Activated naive CD4-positive, alpha-beta T cell treated with anti-CD3 and anti-CD28 coated beads, Interleukin-2, amount 10 ng/mL, durations not matched to agents 7 days and 5 days (primary cell): ENCODE measurements at regions of chr17 and their contacts with region 1.

Region 1: GRCh38 chr17:56939901-56940343 is 20.9 kb downstream of the COIL start:
- DNase-seq: no peak
- H3K4me3 Mint-ChIP-seq: no peak overlapping the region
- H3K27ac Mint-ChIP-seq: no peak overlapping the region
- H3K4me1 Mint-ChIP-seq: peaks cover 11% of the 10 kb centered on the region
- H3K27me3 Mint-ChIP-seq: no peaks in the 10 kb centered on the region

Region 2: DNA sequence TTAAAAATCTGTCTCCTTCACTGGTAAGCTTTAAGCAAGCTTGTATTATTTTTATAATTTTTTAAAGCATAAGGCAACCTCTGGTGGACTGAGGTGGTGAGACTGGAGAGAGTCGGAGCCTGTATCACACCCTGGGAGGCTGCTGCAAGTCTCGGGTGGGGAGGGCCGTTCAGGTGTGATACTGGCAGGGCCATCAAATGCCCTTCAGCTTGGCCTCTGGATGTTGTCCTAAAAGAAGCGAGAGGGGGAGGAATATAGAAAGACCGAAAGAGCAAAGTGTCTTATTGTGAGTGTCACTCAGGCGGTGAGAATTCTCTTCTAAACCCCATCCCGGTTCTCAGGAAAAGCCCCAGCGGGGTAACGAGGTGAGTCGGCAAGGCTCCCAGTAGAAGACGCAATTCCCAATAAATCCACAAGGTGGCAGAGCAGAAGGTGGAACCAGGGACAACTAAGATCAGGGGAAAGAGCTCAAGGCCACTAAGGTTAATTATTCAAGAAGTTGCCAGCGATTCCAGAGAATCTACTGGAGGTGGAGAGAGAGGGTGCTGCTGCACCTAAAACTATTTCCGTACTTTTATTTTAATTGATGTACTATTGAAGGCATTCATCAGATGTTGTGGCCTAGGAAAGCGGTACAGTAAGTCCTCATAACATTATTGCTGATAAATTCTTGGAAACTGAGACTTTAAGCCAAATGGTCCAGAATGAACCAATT is 120.3 kb before region 1 on chr17:
- CTCF ChIA-PET with region 1: interaction called, 35 read pairs
- DNase-seq: peak; percentile 80
- H3K4me3 Mint-ChIP-seq: no peak overlapping the region
- H3K27ac Mint-ChIP-seq: no peak overlapping the region
- H3K4me1 Mint-ChIP-seq: peaks cover 5% of the 10 kb centered on the region
- H3K27me3 Mint-ChIP-seq: no peaks in the 10 kb centered on the region

Region 3: DNA sequence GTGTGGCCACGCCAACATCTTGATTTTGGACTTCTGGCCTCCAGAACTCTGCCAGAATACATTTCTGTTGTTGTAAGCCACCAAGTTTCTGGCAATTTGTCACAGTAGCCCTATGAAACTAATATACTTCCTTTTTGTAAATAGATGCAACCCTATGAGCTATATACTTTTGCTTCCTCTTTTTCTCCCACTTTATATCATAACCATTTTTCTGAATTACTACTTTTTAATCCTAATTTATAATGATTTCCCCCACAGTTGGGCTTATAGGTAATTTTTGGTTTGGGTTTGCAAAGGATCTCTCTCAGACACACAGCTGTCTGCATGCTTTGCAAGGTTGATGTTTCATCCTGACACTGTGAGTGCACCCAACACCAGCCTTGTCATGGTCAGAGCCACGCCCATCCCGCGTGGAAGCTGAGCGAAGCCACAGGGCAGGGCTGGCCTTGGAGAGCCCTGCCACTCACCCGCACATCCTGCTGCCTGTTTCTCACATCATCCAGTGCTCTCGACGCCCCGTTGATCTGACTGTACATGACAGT is 31.9 kb before region 1 on chr17:
- CTCF ChIA-PET with region 1: interaction called, 16 read pairs
- DNase-seq: peak; percentile 68
- H3K4me3 Mint-ChIP-seq: no peak overlapping the region
- H3K27ac Mint-ChIP-seq: peak overlapping the region; percentile 86
- H3K4me1 Mint-ChIP-seq: peaks cover 57% of the 10 kb centered on the region
- H3K27me3 Mint-ChIP-seq: no peaks in the 10 kb centered on the region